ENCODE measurements at regions of chr10 and their contacts with region 1.

Region 1: DNA sequence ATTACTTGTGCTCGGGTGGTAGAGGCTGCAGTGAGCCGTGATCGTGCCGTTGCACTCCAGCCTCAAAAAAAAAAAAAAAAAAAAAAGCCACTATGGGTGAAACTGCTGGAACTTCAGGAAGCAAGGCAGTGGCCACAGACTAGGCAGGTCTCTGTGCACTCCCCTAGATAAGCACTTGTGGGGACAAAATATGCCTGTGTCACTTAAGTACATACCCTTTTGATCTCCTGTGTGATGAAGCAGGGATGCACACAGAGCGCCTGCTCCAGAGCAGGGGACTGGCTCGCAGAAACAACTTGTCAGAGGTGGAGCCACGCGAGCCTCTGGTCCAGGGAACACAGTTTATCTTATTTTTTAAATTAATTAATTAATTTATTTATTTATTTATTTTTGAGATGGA is 42.9 kb upstream of the PSAP start:
- DNase-seq: no peak
- H3K4me3 ChIP-seq: no peak overlapping the region
- H3K27ac ChIP-seq: no peak overlapping the region
- H3K4me1 ChIP-seq: peaks cover 3% of the 10 kb centered on the region
- H3K27me3 ChIP-seq: no peaks in the 10 kb centered on the region
- CTCF ChIP-seq: no peak

Region 2: DNA sequence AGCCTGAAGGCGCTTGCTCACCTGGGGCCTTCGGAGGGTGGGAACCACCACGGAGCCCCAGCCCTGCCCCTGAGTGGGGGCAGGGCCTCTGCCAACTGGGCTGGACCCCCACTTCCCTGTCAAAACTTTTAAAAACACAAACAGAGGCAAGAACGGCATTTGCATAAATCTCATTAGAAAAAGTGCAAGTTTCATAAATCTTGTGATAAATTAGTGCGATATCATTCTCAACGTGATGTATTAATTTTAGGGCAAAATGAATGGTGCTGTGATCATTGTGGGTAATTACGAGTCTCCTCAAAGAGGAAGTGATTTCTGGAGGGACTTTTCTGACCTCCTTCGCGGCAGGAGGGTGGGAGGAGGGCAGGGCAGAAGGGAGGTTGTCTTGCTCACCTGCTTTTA is 398.9 kb before region 1 on chr10:
- CTCF ChIA-PET with region 1: no interaction called
- POLR2A ChIA-PET with region 1: no interaction called
- intact Hi-C with region 1: no loop called
- DNase-seq: no peak
- H3K4me3 ChIP-seq: no peak overlapping the region
- H3K27ac ChIP-seq: no peak overlapping the region
- H3K4me1 ChIP-seq: no peaks in the 10 kb centered on the region
- H3K27me3 ChIP-seq: no peaks in the 10 kb centered on the region
- CTCF ChIP-seq: no peak

Region 3: DNA sequence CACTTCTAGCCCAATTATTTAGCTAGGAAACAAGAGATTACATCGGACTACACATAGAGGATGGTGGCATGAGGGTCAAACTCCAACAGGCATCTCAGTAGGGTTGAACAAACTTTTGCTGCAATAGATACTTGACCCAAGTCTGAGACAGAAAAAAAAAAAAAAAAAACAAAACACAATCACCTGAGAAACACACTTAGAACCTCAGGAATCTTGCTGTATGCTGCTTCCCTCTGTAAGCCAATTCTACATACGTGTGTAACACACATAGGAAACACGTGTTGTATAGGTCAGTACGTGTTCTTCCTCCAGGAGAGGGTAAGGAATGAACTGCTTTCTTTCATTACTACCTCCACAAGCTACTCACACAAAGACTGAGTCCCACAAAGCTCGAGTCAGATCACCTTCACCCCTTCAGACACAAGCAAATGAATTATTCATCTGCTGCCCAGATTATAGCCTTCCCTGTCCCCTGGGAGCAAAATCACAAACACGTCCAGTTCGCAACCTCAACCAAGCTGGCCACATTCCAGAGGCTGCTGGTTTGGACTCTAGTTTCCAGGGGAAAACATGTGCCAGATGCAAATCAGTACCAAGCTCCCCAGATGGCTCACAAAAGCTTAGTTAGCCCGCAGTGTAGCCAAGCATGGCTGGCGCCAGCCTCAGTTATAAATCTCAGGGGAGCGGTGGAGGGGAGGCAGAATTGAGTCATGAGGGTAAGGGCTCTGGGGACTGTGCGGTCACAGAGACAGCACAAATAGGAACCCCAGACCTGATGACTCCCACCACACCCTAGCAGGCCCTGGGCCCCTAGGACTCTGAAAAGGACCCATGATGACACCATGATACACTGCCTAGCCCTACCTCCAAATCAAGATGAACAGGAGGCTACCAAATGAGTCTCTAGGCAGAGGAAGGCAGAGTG is 58.0 kb before region 1 on chr10:
- CTCF ChIA-PET with region 1: interaction called, 13 read pairs
- POLR2A ChIA-PET with region 1: no interaction called
- intact Hi-C with region 1: loop called (anchors 2 kb)
- DNase-seq: peak; percentile 90
- H3K4me3 ChIP-seq: no peak overlapping the region
- H3K27ac ChIP-seq: peak overlapping the region; percentile 78
- H3K4me1 ChIP-seq: peaks cover 56% of the 10 kb centered on the region
- H3K27me3 ChIP-seq: no peaks in the 10 kb centered on the region
- CTCF ChIP-seq: no peak

Region 4: DNA sequence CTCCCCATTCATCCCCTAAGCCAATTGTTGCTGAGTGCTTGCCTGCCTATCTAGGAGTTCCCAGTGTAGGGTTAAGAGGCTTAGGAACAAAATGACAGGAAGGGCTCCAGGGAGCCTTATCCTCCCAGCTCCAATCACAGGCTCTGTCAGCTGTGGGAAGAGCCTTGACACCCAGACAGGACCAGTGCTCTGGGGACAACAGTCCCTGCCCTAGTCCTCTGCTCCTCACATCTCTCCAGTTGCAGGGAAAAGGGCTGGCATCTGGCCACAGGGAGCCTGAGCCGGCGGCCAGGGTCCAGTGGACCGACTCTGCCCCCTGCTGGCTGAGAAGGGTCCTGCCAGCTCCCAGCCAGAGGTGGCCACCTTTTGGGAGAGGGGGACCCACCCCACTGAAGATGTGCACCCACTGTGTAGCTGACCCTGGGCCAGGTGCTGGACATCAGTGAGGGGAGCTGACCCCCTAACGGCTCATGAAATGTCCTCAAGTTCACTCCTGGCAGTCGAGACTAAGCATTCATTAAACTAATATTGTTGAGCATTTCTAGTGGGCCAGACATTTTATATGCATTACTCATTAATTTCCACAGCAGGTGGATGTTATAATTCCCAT is 443.2 kb after region 1 on chr10:
- CTCF ChIA-PET with region 1: interaction called, 6 read pairs
- POLR2A ChIA-PET with region 1: no interaction called
- intact Hi-C with region 1: loop called (anchors 2 kb)
- DNase-seq: peak; percentile 77
- H3K4me3 ChIP-seq: no peak overlapping the region
- H3K27ac ChIP-seq: peak overlapping the region; percentile 47
- H3K4me1 ChIP-seq: peaks cover 19% of the 10 kb centered on the region
- H3K27me3 ChIP-seq: no peaks in the 10 kb centered on the region
- CTCF ChIP-seq: peak; percentile 97

Region 5: DNA sequence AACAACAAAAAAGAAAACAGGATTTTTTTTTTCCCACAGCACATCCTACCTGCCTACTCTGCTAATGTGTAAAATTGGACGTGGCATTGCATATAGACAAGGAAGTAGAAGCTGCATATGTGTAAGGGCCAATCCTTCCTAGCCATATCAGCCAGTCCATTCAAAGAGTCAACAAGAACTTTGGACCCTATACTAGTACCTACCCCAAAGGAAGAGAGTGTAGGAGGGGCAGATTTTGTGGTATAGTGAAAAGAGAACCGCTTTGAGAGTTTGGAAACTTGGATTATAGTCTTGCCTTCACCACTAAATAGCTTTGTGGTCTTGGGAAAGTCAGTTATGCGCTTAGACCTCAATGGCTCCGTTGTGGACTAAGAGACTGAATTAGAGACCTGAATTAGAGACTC is 785.9 kb after region 1 on chr10:
- CTCF ChIA-PET with region 1: no interaction called
- POLR2A ChIA-PET with region 1: no interaction called
- intact Hi-C with region 1: no loop called
- DNase-seq: no peak
- H3K4me3 ChIP-seq: no peak overlapping the region
- H3K27ac ChIP-seq: no peak overlapping the region
- H3K4me1 ChIP-seq: no peaks in the 10 kb centered on the region
- H3K27me3 ChIP-seq: no peaks in the 10 kb centered on the region
- CTCF ChIP-seq: no peak

Measured in A673 (cell line).